H1 (cell line): ENCODE measurements at regions of chr2 and their contacts with region 1.

Region 1: GRCh38 chr2:216404010-216404618 is 8.2 kb upstream of the SMARCAL1 start:
- DNase-seq: peak in 1 of 2 experiments; percentile 69
- H3K4me3 ChIP-seq: no peak overlapping the region
- H3K27ac ChIP-seq: no peak overlapping the region
- H3K4me1 ChIP-seq: peaks cover 2 to 6% (median 3%) of the 10 kb centered on the region in 4 experiments; a peak in 6 of 7 replicates
- H3K27me3 ChIP-seq: no peaks in the 10 kb centered on the region
- CTCF ChIP-seq: peak; percentile 66 to 81 (median 77)
- EP300 ChIP-seq: no peak
- POLR2A ChIP-seq: no peak
- RAD21 ChIP-seq: peak; percentile 69 to 73

Region 2: GRCh38 chr2:216222650-216223352 is 181.3 kb before region 1 on chr2:
- CTCF ChIA-PET with region 1: interaction called, 105 read pairs
- POLR2A ChIA-PET with region 1: interaction called, 4 read pairs
- DNase-seq: no peak
- H3K4me3 ChIP-seq: no peak overlapping the region
- H3K27ac ChIP-seq: no peak overlapping the region
- H3K4me1 ChIP-seq: no peaks in the 10 kb centered on the region
- H3K27me3 ChIP-seq: no peaks in the 10 kb centered on the region
- CTCF ChIP-seq: peak; percentile 71 to 77 (median 76)
- EP300 ChIP-seq: no peak
- POLR2A ChIP-seq: no peak
- RAD21 ChIP-seq: peak; percentile 87

Region 3: GRCh38 chr2:216308576-216308975 is 95.5 kb before region 1 on chr2:
- CTCF ChIA-PET with region 1: interaction called, 15 read pairs
- POLR2A ChIA-PET with region 1: no interaction called
- DNase-seq: no peak
- H3K4me3 ChIP-seq: no peak overlapping the region
- H3K27ac ChIP-seq: no peak overlapping the region
- H3K4me1 ChIP-seq: peaks cover 0 to 4% (median 3%) of the 10 kb centered on the region in 4 experiments; a peak in 4 of 7 replicates
- H3K27me3 ChIP-seq: no peaks in the 10 kb centered on the region
- CTCF ChIP-seq: no peak
- EP300 ChIP-seq: no peak
- POLR2A ChIP-seq: no peak
- RAD21 ChIP-seq: no peak

Region 4: DNA sequence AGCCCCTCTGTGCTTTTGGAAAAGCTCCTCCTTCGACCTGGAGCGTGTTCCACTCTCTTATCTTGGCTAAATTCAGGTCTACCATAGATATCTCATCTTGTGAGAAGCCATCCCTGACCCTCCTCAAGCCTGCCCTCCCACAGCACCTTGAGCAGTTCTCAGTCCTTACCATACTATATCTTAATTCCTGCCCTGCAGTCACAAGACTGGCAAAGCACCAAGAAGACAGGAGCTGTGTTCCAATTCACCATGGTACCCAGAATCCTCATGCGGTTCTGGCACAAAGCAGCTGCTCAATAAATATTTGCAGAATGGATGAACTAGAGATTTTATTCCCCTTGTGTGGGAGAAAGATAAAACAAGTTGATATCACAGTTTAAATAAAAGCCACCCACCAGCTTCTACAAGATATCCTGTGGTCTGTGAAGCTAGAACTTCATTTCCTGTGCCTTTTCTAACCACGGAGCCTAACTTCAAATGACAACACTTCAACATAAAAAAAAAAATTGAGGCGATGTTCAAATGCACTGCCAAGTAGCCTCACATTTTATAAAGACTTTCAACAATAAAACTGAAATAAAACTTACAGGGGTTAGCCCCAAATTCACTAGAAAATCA is 51.4 kb before region 1 on chr2:
- CTCF ChIA-PET with region 1: interaction called, 11 read pairs
- POLR2A ChIA-PET with region 1: no interaction called
- DNase-seq: peak in 1 of 2 experiments; percentile 11
- H3K4me3 ChIP-seq: no peak overlapping the region
- H3K27ac ChIP-seq: no peak overlapping the region
- H3K4me1 ChIP-seq: peaks cover 5 to 20% (median 13%) of the 10 kb centered on the region in 4 experiments
- H3K27me3 ChIP-seq: no peaks in the 10 kb centered on the region
- CTCF ChIP-seq: no peak
- EP300 ChIP-seq: no peak
- POLR2A ChIP-seq: no peak
- RAD21 ChIP-seq: no peak

Region 5: DNA sequence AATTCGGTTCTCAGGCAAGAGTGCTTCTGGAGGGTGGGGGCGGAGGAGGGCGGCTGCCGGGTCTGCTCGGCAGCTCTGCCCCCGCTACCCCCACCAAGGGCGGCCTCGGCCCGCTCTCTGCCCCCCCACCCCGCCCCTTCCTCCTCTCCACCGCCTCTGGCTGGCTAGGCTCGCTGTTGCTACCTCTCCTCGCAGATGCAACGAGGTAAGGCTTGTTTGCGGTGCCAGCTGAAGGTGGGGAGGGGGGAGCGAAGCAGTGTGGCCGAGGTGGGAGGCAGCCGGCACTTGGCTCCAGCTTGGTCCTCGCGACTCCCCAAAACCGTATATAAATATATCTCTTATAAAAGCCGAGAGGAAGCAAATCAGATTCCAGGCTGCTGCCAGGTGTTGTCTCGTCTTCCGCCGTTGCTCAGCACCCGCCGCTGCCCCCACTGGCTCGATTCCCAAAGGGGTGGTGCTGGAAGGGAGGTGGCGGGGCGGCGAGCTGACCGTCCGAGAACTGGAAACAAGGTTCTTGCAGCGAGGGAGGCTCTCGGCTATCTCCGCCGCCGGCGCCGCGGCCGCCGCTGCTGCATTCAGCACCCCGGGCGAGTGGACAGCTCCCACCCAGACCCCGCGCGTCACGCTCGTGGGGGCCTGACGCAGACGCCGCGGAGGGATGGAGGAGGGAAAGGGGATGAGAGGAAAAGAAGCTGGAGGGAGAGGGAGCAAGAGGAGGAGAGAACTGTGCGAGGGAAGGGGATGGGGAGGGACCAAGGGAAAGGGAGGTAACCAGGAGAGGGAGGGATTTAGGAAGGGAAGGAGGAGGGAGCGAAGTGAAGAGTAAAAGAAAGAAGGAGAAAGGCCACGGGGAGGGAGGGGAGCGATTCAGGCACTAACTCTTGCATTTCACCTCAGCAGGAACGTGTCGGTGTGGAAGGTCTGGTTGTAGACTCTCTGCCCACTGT is 32.1 kb before region 1 on chr2 and contains the start of gene MARCHF4:
- CTCF ChIA-PET with region 1: interaction called, 34 read pairs
- POLR2A ChIA-PET with region 1: interaction called, 5 read pairs
- DNase-seq: peak; percentile 34 to 97
- H3K4me3 ChIP-seq: peak within 1 kb of the TSS; percentile 66 to 74 (median 71)
- H3K27ac ChIP-seq: no peak within 1 kb of the TSS
- H3K4me1 ChIP-seq: peaks cover 4 to 10% (median 5%) of the 10 kb centered on the region in 4 experiments; a peak in 5 of 7 replicates
- H3K27me3 ChIP-seq: peaks cover 0 to 9% (median 0%) of the 10 kb centered on the region in 4 experiments; a peak in 4 of 7 replicates
- CTCF ChIP-seq: no peak
- EP300 ChIP-seq: peak in 1 of 2 experiments; percentile 83; a peak in 1 of 3 replicates
- POLR2A ChIP-seq: no peak
- RAD21 ChIP-seq: peak; percentile 23 to 35; a peak in 3 of 4 replicates
- total RNA-seq, gene MARCHF4: 2.9 TPM in 2 replicates

Region 6: GRCh38 chr2:216388046-216388884 is 15.8 kb before region 1 on chr2:
- CTCF ChIA-PET with region 1: interaction called, 79 read pairs
- POLR2A ChIA-PET with region 1: no interaction called
- DNase-seq: no peak
- H3K4me3 ChIP-seq: no peak overlapping the region
- H3K27ac ChIP-seq: no peak overlapping the region
- H3K4me1 ChIP-seq: peaks cover 0 to 8% (median 0%) of the 10 kb centered on the region in 4 experiments; a peak in 1 of 7 replicates
- H3K27me3 ChIP-seq: no peaks in the 10 kb centered on the region
- CTCF ChIP-seq: no peak
- EP300 ChIP-seq: no peak
- POLR2A ChIP-seq: no peak
- RAD21 ChIP-seq: no peak

Region 7: DNA sequence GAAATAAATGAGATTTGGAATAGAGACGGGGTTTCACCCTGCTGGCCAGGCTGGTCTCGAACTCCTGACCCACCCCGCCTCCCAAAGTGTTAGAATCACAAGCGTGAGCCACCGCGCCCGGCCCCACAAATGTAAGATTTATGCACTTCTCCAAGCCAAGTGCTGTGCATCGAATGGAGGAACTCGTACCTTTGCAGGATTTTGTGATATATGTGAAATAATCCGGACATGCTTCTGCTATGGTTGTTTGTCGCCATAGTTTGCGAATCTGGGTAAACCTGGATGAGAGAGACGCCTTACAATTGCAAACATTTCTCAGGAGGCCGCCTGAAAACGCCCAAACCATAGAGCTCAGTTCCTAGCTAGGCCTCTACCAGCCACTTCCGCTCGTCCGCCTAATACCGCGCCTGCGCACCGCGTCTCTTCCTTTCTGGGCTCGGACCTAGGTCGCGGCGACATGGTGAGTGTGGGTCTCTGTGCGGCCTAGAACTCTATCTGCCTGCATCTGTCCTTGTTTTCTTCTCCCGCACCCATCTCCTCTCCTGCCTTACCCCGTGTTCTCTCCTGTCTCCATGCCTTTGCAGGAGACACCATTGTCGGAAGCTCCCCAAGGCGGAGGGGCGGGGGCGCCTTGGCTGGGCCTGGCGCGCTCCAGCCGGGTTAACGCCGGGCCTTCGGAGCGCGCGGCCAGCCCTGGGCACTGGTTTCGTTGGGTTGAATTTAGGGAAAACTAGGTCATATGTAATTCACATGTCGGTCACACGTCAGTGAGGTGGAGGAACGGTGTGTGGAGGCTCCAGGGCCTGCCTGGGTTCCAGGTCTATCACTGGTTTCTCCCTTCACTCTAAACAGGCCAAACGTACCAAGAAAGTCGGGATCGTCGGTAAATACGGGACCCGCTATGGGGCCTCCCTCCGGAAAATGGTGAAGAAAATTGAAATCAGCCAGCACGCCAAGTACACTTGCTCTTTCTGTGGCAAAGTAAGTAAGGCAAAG is 94.6 kb after region 1 on chr2 and contains the start of gene RPL37A:
- CTCF ChIA-PET with region 1: interaction called, 6 read pairs
- POLR2A ChIA-PET with region 1: interaction called, 20 read pairs
- DNase-seq: peak; percentile 75 to 90
- H3K4me3 ChIP-seq: peak within 1 kb of the TSS; percentile 86 to 97 (median 92)
- H3K27ac ChIP-seq: peak within 1 kb of the TSS; percentile 86
- H3K4me1 ChIP-seq: peaks cover 2 to 12% (median 4%) of the 10 kb centered on the region in 4 experiments; a peak in 6 of 7 replicates
- H3K27me3 ChIP-seq: no peaks in the 10 kb centered on the region
- CTCF ChIP-seq: no peak
- EP300 ChIP-seq: no peak
- POLR2A ChIP-seq: peak; percentile 98 to 100
- RAD21 ChIP-seq: no peak
- total RNA-seq, gene RPL37A: 3,180 and 3,341 TPM in 2 replicates

Region 8: DNA sequence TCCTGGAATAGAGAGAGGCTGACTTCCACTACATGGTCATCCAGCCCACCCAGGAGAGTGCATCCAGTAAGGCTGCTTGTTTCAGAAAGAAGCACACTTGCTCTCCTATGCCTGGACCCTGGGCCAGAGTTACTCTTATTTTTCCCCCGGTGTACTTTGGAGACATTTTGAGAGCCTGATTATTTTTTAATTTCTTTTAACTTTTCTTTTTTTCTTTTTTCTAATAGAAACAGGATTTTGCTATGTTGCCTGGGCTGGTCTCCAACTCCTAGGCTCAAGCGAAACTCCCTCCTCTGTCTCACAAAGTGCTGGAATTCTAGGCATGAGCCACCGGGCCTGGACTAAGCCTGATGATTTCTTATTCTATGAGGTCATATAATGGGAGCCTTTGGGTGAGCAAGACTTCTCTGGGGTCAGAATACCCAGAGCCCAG is 156.7 kb after region 1 on chr2:
- CTCF ChIA-PET with region 1: no interaction called
- POLR2A ChIA-PET with region 1: no interaction called
- DNase-seq: no peak
- H3K4me3 ChIP-seq: no peak overlapping the region
- H3K27ac ChIP-seq: no peak overlapping the region
- H3K4me1 ChIP-seq: peaks cover 7 to 20% (median 11%) of the 10 kb centered on the region in 4 experiments
- H3K27me3 ChIP-seq: no peaks in the 10 kb centered on the region
- CTCF ChIP-seq: no peak
- EP300 ChIP-seq: no peak
- POLR2A ChIP-seq: no peak
- RAD21 ChIP-seq: no peak

Region 9: DNA sequence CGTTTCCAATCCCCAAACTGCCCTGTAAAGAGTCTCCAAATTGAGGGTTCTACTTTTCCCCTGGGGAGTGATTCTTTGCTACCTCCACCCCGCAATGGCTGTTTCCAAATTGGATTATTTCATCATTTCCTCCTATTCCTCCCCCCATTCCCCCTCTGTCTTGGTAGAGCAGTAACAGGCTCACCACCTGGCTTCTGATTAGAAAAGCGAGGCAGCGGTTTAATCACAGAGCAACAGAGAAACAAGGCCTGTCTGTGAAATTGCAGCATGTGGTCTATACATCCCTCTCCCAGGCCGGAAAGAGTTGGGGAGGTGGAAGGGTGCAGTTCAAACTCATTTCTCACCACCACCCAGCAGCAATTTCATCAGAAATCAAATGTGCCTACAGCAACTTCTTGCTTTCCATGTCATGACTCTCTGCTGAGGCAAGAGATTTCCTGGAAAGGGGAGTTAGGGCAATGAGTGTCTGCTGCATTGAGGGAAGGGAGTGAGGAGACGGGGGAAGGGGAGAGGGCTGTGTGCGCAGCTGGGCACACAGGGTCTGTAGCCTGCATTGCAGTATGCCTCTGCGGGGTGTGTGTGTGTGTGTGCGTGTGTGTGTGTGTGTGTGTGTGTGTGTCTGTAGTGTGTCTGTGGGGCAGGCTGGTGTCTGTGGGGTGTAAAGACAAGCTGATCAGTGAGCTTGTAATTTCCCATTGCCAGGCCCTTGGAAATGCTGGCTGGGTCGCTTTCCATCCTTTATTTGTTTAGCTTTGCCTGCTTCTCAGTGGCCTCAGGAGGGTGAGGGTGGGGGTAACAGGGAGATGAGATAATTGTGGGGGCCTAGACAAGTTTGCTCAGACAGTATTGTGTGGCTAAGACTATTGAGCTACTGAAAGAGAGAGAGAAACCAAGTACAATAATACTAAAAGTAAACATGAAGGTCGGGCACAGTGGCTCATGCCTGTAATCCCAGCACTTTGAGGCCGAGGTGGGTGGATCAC is 215.6 kb after region 1 on chr2:
- CTCF ChIA-PET with region 1: no interaction called
- POLR2A ChIA-PET with region 1: no interaction called
- DNase-seq: peak in 1 of 2 experiments; percentile 57
- H3K4me3 ChIP-seq: no peak overlapping the region
- H3K27ac ChIP-seq: no peak overlapping the region; the same call in 1 of the 2 replicates
- H3K4me1 ChIP-seq: peaks cover 10 to 17% (median 14%) of the 10 kb centered on the region in 4 experiments
- H3K27me3 ChIP-seq: no peaks in the 10 kb centered on the region; a peak in 1 of 7 replicates
- CTCF ChIP-seq: no peak
- EP300 ChIP-seq: no peak
- POLR2A ChIP-seq: no peak
- RAD21 ChIP-seq: no peak